ENCODE measurements at regions of chr2 and their contacts with region 1.

Region 1: GRCh38 chr2:203225423-203226039 is 13.3 kb upstream of the CYP20A1 start:
- DNase-seq: peak; percentile 44
- ATAC-seq: peak; percentile 69
- H3K4me3 Mint-ChIP-seq: no peak overlapping the region
- H3K27ac Mint-ChIP-seq: no peak overlapping the region
- H3K4me1 Mint-ChIP-seq: no peaks in the 10 kb centered on the region
- H3K27me3 Mint-ChIP-seq: peaks cover 2% of the 10 kb centered on the region

Region 2: GRCh38 chr2:203177361-203177760 is 48.2 kb before region 1 on chr2:
- CTCF ChIA-PET with region 1: no interaction called
- POLR2A ChIA-PET with region 1: no interaction called
- DNase-seq: no peak
- ATAC-seq: no peak
- H3K4me3 Mint-ChIP-seq: no peak overlapping the region
- H3K27ac Mint-ChIP-seq: no peak overlapping the region
- H3K4me1 Mint-ChIP-seq: no peaks in the 10 kb centered on the region
- H3K27me3 Mint-ChIP-seq: no peaks in the 10 kb centered on the region

Region 3: GRCh38 chr2:203238704-203239526 is 13.4 kb after region 1 on chr2 and contains the start of gene CYP20A1:
- CTCF ChIA-PET with region 1: interaction called, 26 read pairs
- POLR2A ChIA-PET with region 1: interaction called, 4 read pairs
- DNase-seq: peak; percentile 96
- ATAC-seq: peak; percentile 91
- H3K4me3 Mint-ChIP-seq: peak within 1 kb of the TSS; percentile 97
- H3K27ac Mint-ChIP-seq: peak within 1 kb of the TSS; percentile 98
- H3K4me1 Mint-ChIP-seq: peaks cover 30% of the 10 kb centered on the region
- H3K27me3 Mint-ChIP-seq: no peaks in the 10 kb centered on the region
- total RNA-seq, gene CYP20A1: 18.4 to 21.1 TPM

Region 4: GRCh38 chr2:203328760-203329540 is 103.4 kb after region 1 on chr2:
- CTCF ChIA-PET with region 1: no interaction called
- POLR2A ChIA-PET with region 1: no interaction called
- DNase-seq: peak; percentile 46
- ATAC-seq: peak; percentile 69
- H3K4me3 Mint-ChIP-seq: peak overlapping the region; percentile 87
- H3K27ac Mint-ChIP-seq: no peak overlapping the region
- H3K4me1 Mint-ChIP-seq: peaks cover 27% of the 10 kb centered on the region
- H3K27me3 Mint-ChIP-seq: no peaks in the 10 kb centered on the region

Region 5: GRCh38 chr2:203453858-203454451 is 228.4 kb after region 1 on chr2:
- CTCF ChIA-PET with region 1: interaction called, 23 read pairs
- POLR2A ChIA-PET with region 1: no interaction called
- DNase-seq: peak; percentile 53
- ATAC-seq: no peak
- H3K4me3 Mint-ChIP-seq: no peak overlapping the region
- H3K27ac Mint-ChIP-seq: no peak overlapping the region
- H3K4me1 Mint-ChIP-seq: no peaks in the 10 kb centered on the region
- H3K27me3 Mint-ChIP-seq: no peaks in the 10 kb centered on the region

Measured in activated CD8-positive, alpha-beta T cell treated with anti-CD3 and anti-CD28 coated beads, Interleukin-2, amount 10 ng/mL, durations not matched to agents 7 days and 5 days (primary cell).